Dorsolateral prefrontal cortex (tissue), 120 donors: ENCODE measurements at regions of chr10 and their contacts with region 1.

Region 1: GRCh38 chr10:20313665-20314064 is 497.4 kb downstream of the PLXDC2 start:
- DNase-seq: peak in 1 of 10 donors; percentile 42
- H3K4me3 ChIP-seq: no peak overlapping the region
- H3K27ac ChIP-seq: peak overlapping the region in 35 of 59 donors; percentile 3 to 78 (median 48)
- H3K27me3 ChIP-seq: no peaks in the 10 kb centered on the region
- CTCF ChIP-seq: no peak

Region 2: DNA sequence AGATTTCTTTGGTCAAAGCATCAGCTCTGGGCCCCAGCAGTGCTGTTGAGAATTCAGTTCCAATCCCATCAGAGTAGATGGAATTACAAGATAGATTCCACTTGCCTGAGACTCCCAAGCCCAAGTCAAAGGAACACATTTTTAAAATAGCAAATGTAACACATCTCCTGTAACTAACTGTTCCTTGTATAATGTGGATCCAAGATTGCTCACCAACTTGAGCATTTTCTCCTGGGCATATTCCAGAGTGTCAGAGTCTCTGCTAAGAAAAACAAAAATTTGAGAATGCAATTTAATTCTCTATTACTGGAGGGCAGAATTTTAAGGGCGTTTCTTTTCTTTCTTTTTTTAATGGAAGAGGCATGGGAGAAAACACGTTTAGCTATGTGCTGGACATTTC is 446.8 kb after region 1 on chr10:
- intact Hi-C with region 1: loop called in 1 of 2 experiments (anchors 5 kb)
- DNase-seq: no peak
- H3K4me3 ChIP-seq: no peak overlapping the region
- H3K27ac ChIP-seq: peak overlapping the region in 37 of 59 donors; percentile 6 to 78 (median 54)
- H3K27me3 ChIP-seq: no peaks in the 10 kb centered on the region
- CTCF ChIP-seq: no peak